ENCODE measurements at regions of chr10 and their contacts with region 1.

Region 1: GRCh38 chr10:1488969-1489548 is 248.3 kb downstream of the ADARB2 start:
- DNase-seq: peak; percentile 87
- ATAC-seq: peak; percentile 87
- H3K4me3 ChIP-seq: peak overlapping the region in 2 of 5 experiments; percentile 10 to 38
- H3K4me3 Mint-ChIP-seq: peak overlapping the region; percentile 78
- H3K27ac ChIP-seq: peak overlapping the region; percentile 40 to 73
- H3K27ac Mint-ChIP-seq: peak overlapping the region; percentile 90
- H3K4me1 ChIP-seq: peaks cover 64 to 70% of the 10 kb centered on the region in 2 donors
- H3K4me1 Mint-ChIP-seq: peaks cover 63% of the 10 kb centered on the region
- H3K27me3 ChIP-seq: no peaks in the 10 kb centered on the region
- H3K27me3 Mint-ChIP-seq: no peaks in the 10 kb centered on the region
- CTCF ChIP-seq: peak; percentile 29

Region 2: GRCh38 chr10:718152-718700 is 770.8 kb before region 1 on chr10:
- CTCF ChIA-PET with region 1: no interaction called
- POLR2A ChIA-PET with region 1: no interaction called
- intact Hi-C with region 1: no loop called
- DNase-seq: no peak
- ATAC-seq: no peak
- H3K4me3 ChIP-seq: no peak overlapping the region
- H3K4me3 Mint-ChIP-seq: no peak overlapping the region
- H3K27ac ChIP-seq: no peak overlapping the region
- H3K27ac Mint-ChIP-seq: no peak overlapping the region
- H3K4me1 ChIP-seq: no peaks in the 10 kb centered on the region
- H3K4me1 Mint-ChIP-seq: no peaks in the 10 kb centered on the region
- H3K27me3 ChIP-seq: peaks cover 0 to 5% (median 0%) of the 10 kb centered on the region in 4 experiments
- H3K27me3 Mint-ChIP-seq: peaks cover 8% of the 10 kb centered on the region
- CTCF ChIP-seq: no peak

Region 3: DNA sequence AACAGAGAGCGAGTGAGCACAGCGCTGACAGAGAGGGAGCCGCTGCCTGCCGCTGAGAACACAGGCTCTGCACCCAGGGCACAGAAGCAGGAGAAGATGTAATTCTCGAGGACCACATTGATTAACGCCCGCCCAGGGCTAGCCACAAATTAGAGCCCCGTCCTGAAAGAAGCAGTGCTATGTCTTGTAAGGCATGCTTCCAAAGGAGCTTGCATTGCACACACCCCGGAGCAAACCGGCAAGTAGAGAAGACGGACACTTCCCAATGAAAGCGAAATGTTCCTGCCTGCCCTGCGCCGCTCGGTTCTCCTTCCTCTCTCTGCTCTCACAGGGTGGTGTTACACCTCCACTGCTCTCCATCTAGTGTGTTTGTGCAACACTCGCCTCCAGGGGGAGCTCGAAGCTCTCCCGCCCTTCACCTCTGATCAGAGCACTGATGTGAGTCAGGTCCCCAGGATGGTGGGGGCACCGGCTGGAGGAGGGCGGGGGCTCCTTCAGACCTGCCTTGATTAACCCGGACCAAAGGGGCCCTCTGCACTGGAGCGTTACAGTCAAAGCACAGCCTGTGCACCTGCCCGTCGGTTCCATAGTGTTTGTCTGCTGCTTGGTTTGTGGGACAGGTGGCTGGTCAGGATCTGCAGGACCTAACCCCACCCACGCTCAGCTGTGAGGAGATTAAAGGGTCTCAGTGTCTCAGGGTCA is 68.2 kb before region 1 on chr10:
- CTCF ChIA-PET with region 1: interaction called, 5 read pairs
- POLR2A ChIA-PET with region 1: interaction called, 5 read pairs
- intact Hi-C with region 1: loop called (anchors 1 kb)
- DNase-seq: peak; percentile 90
- ATAC-seq: peak; percentile 78
- H3K4me3 ChIP-seq: peak overlapping the region in 3 of 5 experiments; percentile 23 to 42 (median 24)
- H3K4me3 Mint-ChIP-seq: peak overlapping the region; percentile 78
- H3K27ac ChIP-seq: peak overlapping the region in 1 of 2 donors; percentile 14
- H3K27ac Mint-ChIP-seq: peak overlapping the region; percentile 80
- H3K4me1 ChIP-seq: peaks cover 50 to 63% of the 10 kb centered on the region in 2 donors
- H3K4me1 Mint-ChIP-seq: peaks cover 60% of the 10 kb centered on the region
- H3K27me3 ChIP-seq: no peaks in the 10 kb centered on the region
- H3K27me3 Mint-ChIP-seq: peaks cover 4% of the 10 kb centered on the region
- CTCF ChIP-seq: peak; percentile 90

Region 4: GRCh38 chr10:1454428-1454827 is 34.6 kb before region 1 on chr10:
- CTCF ChIA-PET with region 1: interaction called, 3 read pairs
- POLR2A ChIA-PET with region 1: interaction called, 3 read pairs
- intact Hi-C with region 1: loop called (anchors 1 kb)
- DNase-seq: peak; percentile 87
- ATAC-seq: peak; percentile 95
- H3K4me3 ChIP-seq: peak overlapping the region in 3 of 5 experiments; percentile 13 to 44 (median 21)
- H3K4me3 Mint-ChIP-seq: peak overlapping the region; percentile 76
- H3K27ac ChIP-seq: peak overlapping the region; percentile 78 to 81
- H3K27ac Mint-ChIP-seq: peak overlapping the region; percentile 91
- H3K4me1 ChIP-seq: peaks cover 36 to 45% of the 10 kb centered on the region in 2 donors
- H3K4me1 Mint-ChIP-seq: peaks cover 66% of the 10 kb centered on the region
- H3K27me3 ChIP-seq: no peaks in the 10 kb centered on the region
- H3K27me3 Mint-ChIP-seq: no peaks in the 10 kb centered on the region
- CTCF ChIP-seq: no peak

Region 5: GRCh38 chr10:1572519-1573333 is 83.7 kb after region 1 on chr10:
- CTCF ChIA-PET with region 1: interaction called, 6 read pairs
- POLR2A ChIA-PET with region 1: interaction called, 4 read pairs
- intact Hi-C with region 1: loop called (anchors 1 kb)
- DNase-seq: no peak
- ATAC-seq: no peak
- H3K4me3 ChIP-seq: no peak overlapping the region
- H3K4me3 Mint-ChIP-seq: no peak overlapping the region
- H3K27ac ChIP-seq: no peak overlapping the region
- H3K27ac Mint-ChIP-seq: no peak overlapping the region
- H3K4me1 ChIP-seq: peaks cover 32% of the 10 kb centered on the region in 2 donors
- H3K4me1 Mint-ChIP-seq: peaks cover 41% of the 10 kb centered on the region
- H3K27me3 ChIP-seq: peaks cover 0 to 18% (median 2%) of the 10 kb centered on the region in 4 experiments
- H3K27me3 Mint-ChIP-seq: peaks cover 34% of the 10 kb centered on the region
- CTCF ChIP-seq: no peak

Region 6: DNA sequence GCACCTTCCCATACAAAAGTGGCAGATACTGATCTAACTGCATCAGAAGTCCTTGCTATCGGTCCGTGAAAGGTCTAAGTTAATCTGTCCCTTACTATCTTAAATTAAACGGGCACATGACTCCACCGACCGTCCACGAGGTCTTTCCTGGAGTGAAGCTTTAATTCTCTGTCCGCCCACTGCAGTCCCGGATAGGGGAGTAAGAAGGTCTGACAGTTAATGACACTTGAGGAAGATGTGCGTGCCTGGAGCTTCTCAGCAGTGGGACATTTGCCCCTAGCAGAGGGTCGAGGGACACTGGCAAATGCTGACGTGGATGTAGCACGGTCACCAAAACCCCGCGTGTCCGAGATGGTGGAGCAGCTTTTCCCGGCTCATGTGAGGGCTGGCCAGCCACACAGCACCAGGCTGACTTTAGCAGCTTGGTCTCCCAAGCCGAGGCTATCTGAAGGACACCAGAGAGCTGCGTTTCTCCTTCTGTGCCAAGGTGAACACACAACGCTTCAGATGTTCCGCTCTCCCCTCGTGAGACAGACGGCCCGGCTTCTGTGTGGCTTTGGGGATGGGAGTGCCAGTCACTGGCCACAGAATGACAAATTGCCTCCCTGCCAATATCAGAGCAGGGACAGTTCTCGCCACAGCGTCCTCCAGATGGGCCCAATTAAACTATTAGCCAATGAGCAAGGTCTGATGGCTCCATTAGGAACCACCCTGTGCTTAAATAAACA is 161.6 kb after region 1 on chr10:
- CTCF ChIA-PET with region 1: no interaction called
- POLR2A ChIA-PET with region 1: no interaction called
- intact Hi-C with region 1: no loop called
- DNase-seq: no peak
- ATAC-seq: no peak
- H3K4me3 ChIP-seq: no peak overlapping the region
- H3K4me3 Mint-ChIP-seq: no peak overlapping the region
- H3K27ac ChIP-seq: no peak overlapping the region
- H3K27ac Mint-ChIP-seq: no peak overlapping the region
- H3K4me1 ChIP-seq: peaks cover 12 to 13% of the 10 kb centered on the region in 2 donors
- H3K4me1 Mint-ChIP-seq: peaks cover 12% of the 10 kb centered on the region
- H3K27me3 ChIP-seq: peaks cover 0 to 14% (median 0%) of the 10 kb centered on the region in 4 experiments
- H3K27me3 Mint-ChIP-seq: peaks cover 19% of the 10 kb centered on the region
- CTCF ChIP-seq: no peak

Region 7: GRCh38 chr10:1737222-1738061 is 248.4 kb after region 1 on chr10 and contains the start of gene ADARB2:
- CTCF ChIA-PET with region 1: no interaction called
- POLR2A ChIA-PET with region 1: interaction called, 4 read pairs
- intact Hi-C with region 1: loop called (anchors 1 kb)
- DNase-seq: peak; percentile 60
- ATAC-seq: peak; percentile 72
- H3K4me3 ChIP-seq: peak within 1 kb of the TSS; percentile 16 to 50 (median 42)
- H3K4me3 Mint-ChIP-seq: peak within 1 kb of the TSS; percentile 61
- H3K27ac ChIP-seq: no peak within 1 kb of the TSS
- H3K27ac Mint-ChIP-seq: no peak within 1 kb of the TSS
- H3K4me1 ChIP-seq: peaks cover 32 to 36% of the 10 kb centered on the region in 2 donors
- H3K4me1 Mint-ChIP-seq: peaks cover 33% of the 10 kb centered on the region
- H3K27me3 ChIP-seq: peaks cover 0 to 64% (median 53%) of the 10 kb centered on the region in 4 experiments
- H3K27me3 Mint-ChIP-seq: peaks cover 77% of the 10 kb centered on the region
- CTCF ChIP-seq: no peak
- total RNA-seq, gene ADARB2: 0.85 and 0.96 TPM in 2 replicates